Esophagus muscularis mucosa (tissue), 4 donors: ENCODE measurements at regions of chr17 and their contacts with region 1.

Region 1: DNA sequence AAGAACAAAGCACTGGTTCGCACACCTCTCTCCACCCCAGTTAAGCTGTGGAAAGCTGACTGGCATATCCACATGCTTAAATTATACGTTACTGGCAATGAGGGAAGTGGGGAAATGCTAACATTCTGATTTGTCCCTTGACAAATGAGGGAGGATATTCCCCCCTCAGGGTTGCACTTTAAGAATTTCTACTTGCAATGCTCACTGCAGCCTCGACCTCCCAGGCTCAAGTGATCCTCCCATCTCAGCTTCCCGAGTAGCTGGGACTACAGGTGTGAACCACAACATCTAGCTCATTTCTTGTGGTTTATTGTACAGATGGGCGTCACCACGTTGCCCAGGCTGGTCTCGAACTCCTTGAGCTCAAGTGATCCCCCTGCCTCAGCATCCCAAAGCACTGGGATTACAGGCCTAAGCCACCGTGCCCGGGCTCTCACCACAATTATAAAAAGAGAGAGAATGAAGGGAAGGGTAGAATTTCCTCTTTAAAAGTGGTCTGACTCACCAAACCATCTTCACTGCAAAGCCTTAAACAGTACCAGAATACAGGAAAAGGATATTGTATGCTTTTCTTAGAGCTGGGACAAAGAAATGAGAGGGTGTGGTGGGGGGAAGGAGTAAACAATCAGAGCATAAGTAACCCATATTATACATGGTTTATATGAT is 38.9 kb downstream of the KANSL1 start:
- DNase-seq: no peak
- H3K4me3 ChIP-seq: no peak overlapping the region
- H3K27ac ChIP-seq: peak overlapping the region; percentile 57 to 83 (median 78)
- H3K4me1 ChIP-seq: peaks cover 87 to 100% (median 99%) of the 10 kb centered on the region in 4 donors
- H3K27me3 ChIP-seq: no peaks in the 10 kb centered on the region
- CTCF ChIP-seq: no peak
- EP300 ChIP-seq: no peak
- POLR2A ChIP-seq: no peak

Region 2: GRCh38 chr17:46193626-46194392 is 39.5 kb after region 1 on chr17:
- intact Hi-C with region 1: loop called (anchors 5 kb)
- DNase-seq: peak; percentile 98
- H3K4me3 ChIP-seq: peak overlapping the region; percentile 96 to 100 (median 99)
- H3K27ac ChIP-seq: peak overlapping the region; percentile 100
- H3K4me1 ChIP-seq: peaks cover 34 to 63% (median 56%) of the 10 kb centered on the region in 4 donors
- H3K27me3 ChIP-seq: no peaks in the 10 kb centered on the region
- CTCF ChIP-seq: peak; percentile 29 to 43 (median 42)
- EP300 ChIP-seq: no peak
- POLR2A ChIP-seq: peak; percentile 49